ENCODE measurements at regions of chr6 and their contacts with region 1.

Region 1: DNA sequence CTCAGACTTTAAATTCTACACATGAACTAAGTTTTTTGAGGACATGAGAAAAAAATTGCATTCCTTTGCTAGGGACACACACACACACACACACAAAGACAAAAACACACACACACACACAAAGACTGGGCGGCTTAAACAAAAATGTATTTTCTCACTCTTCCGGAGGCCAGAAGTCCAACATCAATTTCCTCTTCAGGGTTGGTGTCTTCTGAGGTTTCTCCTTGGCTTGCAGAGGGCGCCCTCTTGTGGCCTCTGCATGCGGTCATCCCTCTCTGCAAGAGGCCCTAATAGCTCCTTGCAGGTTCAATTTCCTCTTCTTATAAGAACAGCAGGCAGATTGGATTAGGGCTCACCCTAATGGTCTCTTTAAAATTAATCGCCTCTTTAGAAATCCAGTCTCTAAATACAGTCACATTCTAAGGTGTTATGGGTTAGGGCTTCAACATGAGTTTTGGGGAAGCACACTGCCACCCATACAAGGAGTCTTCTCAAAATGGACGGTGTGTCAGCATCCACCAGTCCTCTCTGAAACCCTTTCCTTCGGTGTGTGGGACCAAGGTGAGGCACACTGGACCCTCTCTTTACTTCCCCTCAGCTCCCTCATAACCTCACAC is 61.4 kb downstream of the GPR6 start:
- DNase-seq: peak; percentile 92
- H3K4me3 ChIP-seq: peak overlapping the region in 1 of 3 experiments; percentile 14
- H3K27ac ChIP-seq: no peak overlapping the region
- H3K4me1 ChIP-seq: no peaks in the 10 kb centered on the region
- H3K27me3 ChIP-seq: peaks cover 4% of the 10 kb centered on the region in 2 experiments
- CTCF ChIP-seq: peak; percentile 84 to 89
- POLR2A ChIP-seq: no peak

Region 2: GRCh38 chr6:109671733-109672132 is 367.7 kb before region 1 on chr6:
- CTCF ChIA-PET with region 1: interaction called, 11 read pairs
- POLR2A ChIA-PET with region 1: no interaction called
- dilution Hi-C with region 1: no loop called
- intact Hi-C with region 1: no loop called
- DNase-seq: peak; percentile 29
- H3K4me3 ChIP-seq: no peak overlapping the region
- H3K27ac ChIP-seq: peak overlapping the region; percentile 90
- H3K4me1 ChIP-seq: peaks cover 40% of the 10 kb centered on the region
- H3K27me3 ChIP-seq: no peaks in the 10 kb centered on the region
- CTCF ChIP-seq: no peak
- POLR2A ChIP-seq: peak; percentile 17

Region 3: DNA sequence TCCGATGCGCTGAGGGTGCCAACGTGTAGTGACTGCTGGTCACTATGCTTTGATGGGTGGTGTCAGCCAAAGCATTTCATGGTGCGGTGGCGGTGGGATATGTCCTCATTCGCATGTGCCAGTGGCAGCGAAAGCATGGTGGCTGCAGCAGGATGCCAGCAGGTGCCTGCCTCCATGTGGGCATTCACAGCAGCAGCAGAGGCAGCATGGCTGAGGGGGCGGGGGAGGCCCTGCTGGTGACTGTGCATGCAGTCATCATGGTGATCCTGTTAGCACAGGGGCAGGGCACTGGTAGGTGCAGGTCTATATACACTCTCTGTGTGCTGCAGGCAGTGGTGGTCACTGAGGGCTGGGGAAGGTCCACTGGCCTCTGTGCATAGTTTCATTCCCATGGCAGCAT is 326.4 kb before region 1 on chr6:
- CTCF ChIA-PET with region 1: interaction called, 36 read pairs
- POLR2A ChIA-PET with region 1: no interaction called
- dilution Hi-C with region 1: no loop called
- intact Hi-C with region 1: no loop called
- DNase-seq: no peak
- H3K4me3 ChIP-seq: no peak overlapping the region
- H3K27ac ChIP-seq: no peak overlapping the region
- H3K4me1 ChIP-seq: no peaks in the 10 kb centered on the region
- H3K27me3 ChIP-seq: no peaks in the 10 kb centered on the region
- CTCF ChIP-seq: no peak
- POLR2A ChIP-seq: no peak

Region 4: DNA sequence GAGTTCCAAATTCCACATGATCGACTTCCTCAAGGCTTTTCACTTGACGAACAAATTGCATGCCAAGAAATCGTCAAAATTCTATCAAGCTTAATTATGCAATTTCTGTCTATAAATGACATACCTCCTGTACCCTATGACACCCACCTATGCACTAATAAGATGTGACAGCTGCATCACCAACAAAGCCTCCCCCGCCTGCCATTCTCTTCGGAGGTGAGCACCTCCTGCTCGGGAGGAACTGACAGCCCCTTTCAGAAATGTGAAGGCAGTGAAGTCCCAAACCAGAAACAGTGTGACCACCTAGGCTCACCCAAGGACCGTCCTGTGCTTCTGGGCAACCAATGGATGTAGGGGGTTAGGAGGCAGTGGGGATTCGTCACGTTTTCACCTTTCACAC is 24.3 kb before region 1 on chr6:
- CTCF ChIA-PET with region 1: interaction called, 19 read pairs
- POLR2A ChIA-PET with region 1: no interaction called
- dilution Hi-C with region 1: no loop called
- intact Hi-C with region 1: no loop called
- DNase-seq: no peak
- H3K4me3 ChIP-seq: no peak overlapping the region
- H3K27ac ChIP-seq: no peak overlapping the region
- H3K4me1 ChIP-seq: no peaks in the 10 kb centered on the region
- H3K27me3 ChIP-seq: peaks cover under 1 to 2% of the 10 kb centered on the region in 2 experiments
- CTCF ChIP-seq: no peak
- POLR2A ChIP-seq: no peak

Region 5: GRCh38 chr6:110053395-110054240 is 14.1 kb after region 1 on chr6:
- CTCF ChIA-PET with region 1: interaction called, 26 read pairs
- POLR2A ChIA-PET with region 1: interaction called, 3 read pairs
- dilution Hi-C with region 1: no loop called
- intact Hi-C with region 1: loop called (anchors 1 kb)
- DNase-seq: peak; percentile 44
- H3K4me3 ChIP-seq: no peak overlapping the region
- H3K27ac ChIP-seq: no peak overlapping the region
- H3K4me1 ChIP-seq: no peaks in the 10 kb centered on the region
- H3K27me3 ChIP-seq: peaks cover 3 to 29% of the 10 kb centered on the region in 2 experiments
- CTCF ChIP-seq: peak; percentile 56 to 63
- POLR2A ChIP-seq: no peak